Naive thymus-derived CD4-positive, alpha-beta T cell (primary cell): ENCODE measurements at regions of chr6 and their contacts with region 1.

Region 1: GRCh38 chr6:125779924-125780539 is 10.7 kb upstream of the NCOA7 start:
- DNase-seq: peak; percentile 83 to 96 (median 94)
- ATAC-seq: peak; percentile 89
- H3K4me3 ChIP-seq: peak overlapping the region; percentile 84
- H3K4me3 Mint-ChIP-seq: no peak overlapping the region
- H3K27ac ChIP-seq: peak overlapping the region; percentile 77
- H3K27ac Mint-ChIP-seq: no peak overlapping the region
- H3K4me1 ChIP-seq: peaks cover 4 to 19% of the 10 kb centered on the region in 2 donors
- H3K4me1 Mint-ChIP-seq: peaks cover 5 to 27% (median 22%) of the 10 kb centered on the region in 7 donors
- H3K27me3 ChIP-seq: no peaks in the 10 kb centered on the region
- H3K27me3 Mint-ChIP-seq: peaks cover 0 to 28% (median 0%) of the 10 kb centered on the region in 5 donors

Region 2: DNA sequence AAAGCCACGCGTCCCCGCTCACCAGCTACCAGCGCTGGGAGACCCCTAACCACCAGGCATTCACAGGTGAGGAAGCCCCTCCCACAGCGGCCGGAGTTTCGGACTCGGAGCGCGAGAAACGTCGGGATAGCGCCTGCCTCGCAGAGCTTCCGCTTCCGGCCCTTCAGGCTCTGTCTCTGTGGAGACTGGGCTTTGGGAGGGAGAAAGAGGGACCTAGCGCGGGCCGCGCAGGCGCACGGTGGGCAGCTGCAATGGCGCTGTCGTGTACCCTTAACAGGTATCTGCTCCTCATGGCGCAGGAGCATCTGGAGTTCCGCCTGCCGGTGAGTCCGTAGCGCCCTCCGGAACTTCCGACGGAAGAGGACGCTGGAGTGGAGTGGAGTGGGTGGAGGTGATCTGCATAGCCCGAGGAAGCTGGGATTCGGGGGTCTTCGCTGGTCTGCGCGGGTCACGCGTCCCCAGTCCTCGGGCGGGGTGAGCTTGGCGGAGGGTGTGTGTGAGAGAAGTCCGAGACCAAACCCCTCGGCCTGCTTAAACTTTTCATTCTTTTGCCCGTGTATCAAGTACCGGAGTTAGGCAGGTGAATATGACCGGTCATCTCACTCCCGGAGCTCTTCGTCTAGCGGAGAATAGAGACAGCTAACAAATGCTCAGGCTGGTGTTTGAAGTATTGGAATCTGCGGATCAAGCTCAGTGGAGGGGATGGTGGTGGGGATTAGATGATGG is 206.4 kb after region 1 on chr6 and contains the start of gene TRMT11:
- CTCF ChIA-PET with region 1: interaction called, 3 read pairs
- POLR2A ChIA-PET with region 1: interaction called, 22 read pairs
- intact Hi-C with region 1: loop called (anchors 1 kb)
- DNase-seq: peak; percentile 58 to 80 (median 77)
- ATAC-seq: peak; percentile 95
- H3K4me3 ChIP-seq: peak within 1 kb of the TSS; percentile 89
- H3K4me3 Mint-ChIP-seq: peak within 1 kb of the TSS in 4 of 10 donors; percentile 12 to 40 (median 24)
- H3K27ac ChIP-seq: peak within 1 kb of the TSS; percentile 76
- H3K27ac Mint-ChIP-seq: no peak within 1 kb of the TSS
- H3K4me1 ChIP-seq: peaks cover 14 to 21% of the 10 kb centered on the region in 2 donors
- H3K4me1 Mint-ChIP-seq: peaks cover 0 to 19% (median 2%) of the 10 kb centered on the region in 7 donors
- H3K27me3 ChIP-seq: no peaks in the 10 kb centered on the region
- H3K27me3 Mint-ChIP-seq: no peaks in the 10 kb centered on the region
- total RNA-seq, gene TRMT11: 13.6 to 34.1 (median 20.1) TPM